ENCODE measurements at regions of chr1 and their contacts with region 1.

Region 1: GRCh38 chr1:114511032-114511785 is at the start of gene TRIM33:
- DNase-seq: peak; percentile 85 to 95
- H3K4me3 ChIP-seq: peak within 1 kb of the TSS; percentile 90 to 98
- H3K27ac ChIP-seq: peak within 1 kb of the TSS; percentile 93 to 96
- H3K4me1 ChIP-seq: peaks cover 0 to 43% (median 31%) of the 10 kb centered on the region in 4 donors
- H3K27me3 ChIP-seq: no peaks in the 10 kb centered on the region
- CTCF ChIP-seq: no peak

Region 2: DNA sequence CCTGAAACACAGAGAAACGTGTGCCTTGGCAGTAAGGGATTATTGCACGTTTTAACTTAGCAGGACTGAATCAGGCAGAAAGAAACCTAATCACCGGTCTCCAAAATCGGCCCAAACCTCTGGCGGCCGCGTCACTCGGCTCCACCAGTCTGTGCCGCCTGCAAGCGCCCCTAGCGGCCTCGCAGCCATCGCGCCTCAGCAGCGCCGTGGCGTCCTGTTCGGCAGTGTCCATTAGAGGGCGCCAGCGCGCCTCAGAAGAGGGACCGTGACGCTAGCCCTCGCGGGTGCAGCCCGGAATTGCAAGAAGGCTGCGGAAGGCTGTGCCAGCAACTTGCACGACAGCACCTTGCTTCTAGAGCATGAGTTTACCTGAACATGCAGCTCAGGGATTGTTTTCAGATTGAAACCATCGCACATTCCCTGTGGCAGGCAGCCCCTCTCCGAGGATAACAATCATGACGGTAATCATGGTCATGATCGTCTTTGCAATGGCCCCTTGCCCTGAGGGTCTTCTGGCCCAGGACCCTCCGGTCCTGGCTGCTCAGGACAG is 164.7 kb before region 1 on chr1:
- intact Hi-C with region 1: loop called (anchors 2 kb)
- DNase-seq: peak; percentile 94 to 97
- H3K4me3 ChIP-seq: peak overlapping the region; percentile 50 to 64
- H3K27ac ChIP-seq: peak overlapping the region; percentile 92 to 94
- H3K4me1 ChIP-seq: peaks cover 0 to 11% (median 8%) of the 10 kb centered on the region in 4 donors
- H3K27me3 ChIP-seq: no peaks in the 10 kb centered on the region
- CTCF ChIP-seq: peak; percentile 100

Region 3: DNA sequence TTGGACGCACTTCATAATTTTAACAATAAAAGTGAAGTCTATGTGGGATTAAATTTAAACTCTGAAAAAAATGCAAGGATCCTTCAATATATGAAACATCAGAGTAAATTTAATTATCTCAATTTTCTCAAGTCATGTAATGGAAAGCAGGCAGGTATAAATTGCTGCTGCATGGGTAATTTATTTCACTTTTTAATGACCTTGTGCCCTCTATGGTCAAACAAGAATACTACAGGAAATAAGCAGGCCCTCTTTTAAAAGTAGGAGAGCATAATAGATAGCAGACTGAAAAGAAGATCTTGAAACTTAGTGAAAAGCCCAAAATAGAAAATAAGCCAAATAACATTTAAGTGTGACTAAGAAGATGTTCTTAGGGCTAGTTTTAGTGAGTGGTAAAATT is 47.3 kb after region 1 on chr1:
- intact Hi-C with region 1: no loop called
- DNase-seq: no peak
- H3K4me3 ChIP-seq: no peak overlapping the region
- H3K27ac ChIP-seq: no peak overlapping the region
- H3K4me1 ChIP-seq: no peaks in the 10 kb centered on the region
- H3K27me3 ChIP-seq: no peaks in the 10 kb centered on the region
- CTCF ChIP-seq: peak in 1 of 2 experiments; percentile 27

Region 4: GRCh38 chr1:114581335-114582287 is 70.4 kb after region 1 on chr1 and contains the start of gene BCAS2:
- intact Hi-C with region 1: loop called (anchors 2 kb)
- DNase-seq: peak; percentile 98 to 99
- H3K4me3 ChIP-seq: peak within 1 kb of the TSS; percentile 65 to 78
- H3K27ac ChIP-seq: peak within 1 kb of the TSS; percentile 87 to 89
- H3K4me1 ChIP-seq: peaks cover 0 to 36% (median 23%) of the 10 kb centered on the region in 4 donors
- H3K27me3 ChIP-seq: no peaks in the 10 kb centered on the region
- CTCF ChIP-seq: no peak